Activated naive CD4-positive, alpha-beta T cell treated with anti-CD3 and anti-CD28 coated beads, Interleukin-2, amount 10 ng/mL, durations not matched to agents 7 days and 5 days (primary cell): ENCODE measurements at regions of chr6 and their contacts with region 1.

Region 1: GRCh38 chr6:144482142-144482541 is 197.0 kb downstream of the UTRN start:
- DNase-seq: peak; percentile 84
- H3K4me3 Mint-ChIP-seq: no peak overlapping the region
- H3K27ac Mint-ChIP-seq: peak overlapping the region; percentile 42
- H3K4me1 Mint-ChIP-seq: peaks cover 16% of the 10 kb centered on the region
- H3K27me3 Mint-ChIP-seq: no peaks in the 10 kb centered on the region

Region 2: GRCh38 chr6:144165784-144166183 is 316.4 kb before region 1 on chr6:
- CTCF ChIA-PET with region 1: no interaction called
- DNase-seq: no peak
- H3K4me3 Mint-ChIP-seq: no peak overlapping the region
- H3K27ac Mint-ChIP-seq: no peak overlapping the region
- H3K4me1 Mint-ChIP-seq: no peaks in the 10 kb centered on the region
- H3K27me3 Mint-ChIP-seq: no peaks in the 10 kb centered on the region

Region 3: DNA sequence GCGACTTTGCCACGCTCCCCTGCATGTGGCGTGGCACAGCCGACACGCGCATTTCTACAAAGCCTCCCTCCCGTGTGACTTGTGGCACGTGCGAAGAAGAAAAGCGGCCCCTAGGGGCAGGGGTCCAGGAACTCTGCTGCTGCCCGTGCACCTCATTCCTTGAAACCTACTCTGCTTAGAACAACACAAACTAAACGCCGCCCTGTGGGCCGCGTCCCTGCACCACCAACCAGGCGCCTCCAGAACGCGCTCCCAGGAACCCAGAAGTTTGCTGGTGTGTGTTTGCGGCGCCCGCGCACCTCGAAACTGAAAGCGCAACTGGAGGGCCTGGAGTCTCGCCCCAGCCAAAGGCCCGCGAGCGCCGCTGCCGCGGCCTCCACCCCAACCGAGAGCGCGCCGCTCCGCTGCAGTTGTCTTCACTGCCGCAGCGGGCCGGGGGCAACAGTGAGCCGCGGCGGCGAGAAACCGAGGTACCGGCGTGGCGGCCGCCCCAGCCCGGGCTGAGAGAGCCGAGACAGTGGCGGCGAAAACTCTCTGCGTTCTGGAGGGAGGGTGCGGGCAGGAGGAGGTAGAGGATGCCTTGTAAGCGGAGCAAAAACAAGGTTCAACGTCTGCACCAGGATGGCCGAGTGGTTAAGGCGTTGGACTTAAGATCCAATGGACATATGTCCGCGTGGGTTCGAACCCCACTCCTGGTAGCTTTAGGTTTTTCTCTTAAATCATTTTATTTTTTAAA is 266.0 kb before region 1 on chr6:
- CTCF ChIA-PET with region 1: interaction called, 13 read pairs
- DNase-seq: peak; percentile 95
- H3K4me3 Mint-ChIP-seq: peak overlapping the region; percentile 81
- H3K27ac Mint-ChIP-seq: peak overlapping the region; percentile 89
- H3K4me1 Mint-ChIP-seq: peaks cover 36% of the 10 kb centered on the region
- H3K27me3 Mint-ChIP-seq: peaks cover 22% of the 10 kb centered on the region

Region 4: GRCh38 chr6:144262470-144263369 is 219.4 kb before region 1 on chr6:
- CTCF ChIA-PET with region 1: interaction called, 12 read pairs
- DNase-seq: peak; percentile 48
- H3K4me3 Mint-ChIP-seq: no peak overlapping the region
- H3K27ac Mint-ChIP-seq: no peak overlapping the region
- H3K4me1 Mint-ChIP-seq: no peaks in the 10 kb centered on the region
- H3K27me3 Mint-ChIP-seq: peaks cover 5% of the 10 kb centered on the region

Region 5: GRCh38 chr6:144460327-144461095 is 21.6 kb before region 1 on chr6:
- CTCF ChIA-PET with region 1: interaction called, 16 read pairs
- DNase-seq: no peak
- H3K4me3 Mint-ChIP-seq: peak overlapping the region; percentile 47
- H3K27ac Mint-ChIP-seq: peak overlapping the region; percentile 91
- H3K4me1 Mint-ChIP-seq: peaks cover 22% of the 10 kb centered on the region
- H3K27me3 Mint-ChIP-seq: no peaks in the 10 kb centered on the region